Activated CD4-positive, alpha-beta memory T cell treated with anti-CD3 and anti-CD28 coated beads for 36 hours (primary cell): ENCODE measurements at regions of chr16 and their contacts with region 1.

Region 1: GRCh38 chr16:78394604-78395003 is 295.1 kb downstream of the WWOX start:
- DNase-seq: no peak
- H3K4me3 Mint-ChIP-seq: no peak overlapping the region
- H3K27ac Mint-ChIP-seq: no peak overlapping the region
- H3K4me1 Mint-ChIP-seq: no peaks in the 10 kb centered on the region
- H3K27me3 Mint-ChIP-seq: no peaks in the 10 kb centered on the region

Region 2: DNA sequence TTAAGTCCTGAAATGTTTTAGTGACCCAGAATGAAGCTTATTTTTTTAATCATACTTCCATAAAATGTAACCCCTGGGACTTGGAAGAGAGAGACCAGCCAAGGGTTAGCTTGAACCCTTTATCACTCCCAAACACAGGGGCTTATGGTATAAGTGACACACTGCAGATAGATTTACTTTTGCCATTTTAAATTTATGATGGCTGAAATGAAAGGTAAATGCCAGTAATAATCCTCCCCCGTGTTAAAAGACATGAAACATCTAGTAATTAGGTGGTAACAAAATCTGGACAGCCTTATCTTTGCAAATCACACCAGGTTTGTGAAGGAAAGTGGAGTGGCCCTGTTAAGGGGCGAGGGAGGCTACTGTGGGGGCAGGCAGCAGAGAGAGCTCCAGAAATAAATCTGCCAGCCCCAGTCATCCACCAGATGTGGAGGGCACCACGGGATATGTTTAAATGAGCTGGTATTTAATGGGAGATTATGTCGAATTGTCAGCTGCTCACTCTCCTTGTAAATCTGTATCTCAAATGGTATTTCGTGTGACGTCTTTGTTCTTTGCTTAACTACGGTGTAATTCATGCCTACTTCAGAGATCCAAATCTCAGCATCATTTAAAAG is 31.4 kb after region 1 on chr16:
- CTCF ChIA-PET with region 1: no interaction called
- POLR2A ChIA-PET with region 1: no interaction called
- intact Hi-C with region 1: loop called (anchors 1 kb)
- DNase-seq: no peak
- H3K4me3 Mint-ChIP-seq: no peak overlapping the region
- H3K27ac Mint-ChIP-seq: no peak overlapping the region
- H3K4me1 Mint-ChIP-seq: no peaks in the 10 kb centered on the region
- H3K27me3 Mint-ChIP-seq: no peaks in the 10 kb centered on the region